ENCODE measurements at regions of chr10 and their contacts with region 1.

Region 1: DNA sequence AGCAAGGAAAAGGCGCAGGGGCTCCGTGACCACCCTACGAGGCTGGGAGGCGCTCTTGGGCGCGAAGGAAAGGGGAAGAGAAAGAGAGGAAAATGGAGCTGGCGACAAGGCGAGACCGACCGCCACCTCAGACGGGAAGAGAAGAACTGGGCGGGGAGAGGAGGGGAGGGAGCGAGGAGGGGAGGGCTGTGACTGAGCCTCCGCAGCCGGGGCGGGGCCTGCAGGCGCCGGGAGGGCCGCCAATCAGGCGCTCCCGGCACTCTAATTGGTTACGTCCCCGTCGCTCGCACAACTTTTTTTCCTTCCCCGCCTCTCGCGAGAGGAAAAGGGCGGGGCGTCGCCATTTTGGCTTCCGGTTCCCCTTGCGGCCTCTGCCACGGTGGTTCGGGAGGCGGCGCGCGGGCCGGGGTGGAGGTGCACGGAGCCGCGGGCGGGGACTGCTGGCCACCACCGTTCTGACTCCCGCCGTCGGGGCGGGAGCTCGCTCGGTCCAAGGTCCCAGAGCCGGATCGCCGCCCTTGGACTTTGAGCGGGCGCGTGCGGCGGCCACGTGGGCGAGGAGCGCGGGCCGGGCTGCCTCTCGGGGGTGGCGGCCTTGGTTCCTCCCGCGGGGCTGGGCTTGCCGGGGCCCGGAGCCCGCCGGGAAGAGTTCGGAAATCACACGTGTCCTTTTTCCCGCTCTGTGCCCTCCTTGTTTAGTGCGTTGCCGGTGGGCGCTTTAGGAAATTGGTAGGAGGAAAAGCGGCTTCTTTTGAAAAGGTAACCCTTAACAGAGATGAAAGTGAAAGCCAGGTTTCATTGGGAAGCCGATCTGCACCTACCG is at the start of gene GDI2:
- DNase-seq: peak; percentile 96
- H3K4me3 Mint-ChIP-seq: peak within 1 kb of the TSS; percentile 99
- H3K27ac Mint-ChIP-seq: peak within 1 kb of the TSS; percentile 89
- H3K4me1 Mint-ChIP-seq: peaks cover 51% of the 10 kb centered on the region
- H3K27me3 Mint-ChIP-seq: no peaks in the 10 kb centered on the region
- total RNA-seq, gene GDI2: 301 and 302 TPM in 2 replicates

Region 2: GRCh38 chr10:5629303-5630111 is 184.0 kb before region 1 on chr10:
- intact Hi-C with region 1: loop called (anchors 1 kb)
- DNase-seq: peak; percentile 79
- H3K4me3 Mint-ChIP-seq: no peak overlapping the region
- H3K27ac Mint-ChIP-seq: peak overlapping the region; percentile 83
- H3K4me1 Mint-ChIP-seq: peaks cover 19% of the 10 kb centered on the region
- H3K27me3 Mint-ChIP-seq: peaks cover 2% of the 10 kb centered on the region

Region 3: DNA sequence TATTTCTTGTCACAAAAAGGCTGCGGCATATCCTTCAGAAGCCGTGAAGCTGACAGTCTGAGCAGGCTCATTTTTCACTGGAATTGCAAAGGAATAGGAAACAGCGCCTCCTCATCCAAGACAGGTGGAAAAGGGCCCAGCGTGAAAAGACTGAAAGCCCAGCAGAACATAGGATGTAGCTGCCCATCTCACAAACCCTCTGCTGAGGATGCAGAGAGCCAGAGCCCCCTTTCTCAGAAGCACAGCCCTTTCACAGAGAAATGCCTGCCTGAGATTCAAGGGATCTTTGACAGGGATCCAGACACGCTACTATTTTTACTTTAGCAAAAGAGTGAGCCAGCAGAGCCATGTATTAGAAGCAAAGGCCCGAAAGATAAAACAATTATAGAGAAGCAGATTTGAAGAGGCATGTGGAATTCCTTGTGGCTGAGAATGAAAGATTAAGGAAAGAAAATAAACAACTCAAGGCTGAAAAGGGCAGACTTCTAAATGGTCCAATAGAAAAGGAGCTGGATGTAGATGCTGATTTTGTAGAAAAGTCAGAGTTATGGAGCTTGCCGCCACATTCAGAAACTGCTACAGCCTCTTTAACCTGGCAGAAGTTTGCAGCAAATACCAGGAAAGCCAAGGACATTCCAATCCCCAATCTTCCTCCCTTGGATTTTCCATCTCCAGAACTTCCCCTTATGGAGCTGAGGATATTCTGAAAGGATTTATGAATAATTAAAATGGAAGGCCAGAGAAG is 37.2 kb before region 1 on chr10:
- intact Hi-C with region 1: loop called (anchors 5 kb)
- DNase-seq: no peak
- H3K4me3 Mint-ChIP-seq: peak overlapping the region; percentile 11
- H3K27ac Mint-ChIP-seq: peak overlapping the region; percentile 85
- H3K4me1 Mint-ChIP-seq: peaks cover 31% of the 10 kb centered on the region
- H3K27me3 Mint-ChIP-seq: no peaks in the 10 kb centered on the region

Region 4: DNA sequence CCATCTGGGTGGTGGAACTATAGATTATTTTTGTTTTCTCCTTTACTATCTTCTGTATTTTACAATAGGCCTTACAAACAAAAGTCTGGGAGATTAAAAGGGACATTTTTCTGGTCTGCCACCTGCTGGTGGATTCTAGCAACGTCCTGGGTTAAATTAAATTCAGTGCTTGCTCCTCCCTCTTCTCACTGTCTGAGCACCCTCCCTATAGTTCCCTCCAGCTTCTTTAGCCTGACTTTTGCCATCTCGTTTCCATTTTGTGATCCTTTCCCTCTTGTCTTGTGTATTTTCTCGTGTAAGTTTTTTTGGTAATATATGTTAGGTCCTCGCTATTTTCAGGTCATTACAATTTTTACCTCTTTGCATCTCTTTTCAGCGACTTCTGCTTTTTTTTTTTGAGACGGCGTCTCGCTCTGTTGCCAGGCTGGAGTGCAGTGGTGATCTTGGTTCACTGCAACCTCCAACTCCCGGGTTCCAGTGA is 60.1 kb after region 1 on chr10:
- intact Hi-C with region 1: loop called (anchors 1 kb)
- DNase-seq: peak; percentile 55
- H3K4me3 Mint-ChIP-seq: no peak overlapping the region
- H3K27ac Mint-ChIP-seq: peak overlapping the region; percentile 4
- H3K4me1 Mint-ChIP-seq: peaks cover 11% of the 10 kb centered on the region
- H3K27me3 Mint-ChIP-seq: no peaks in the 10 kb centered on the region

Region 5: GRCh38 chr10:5977471-5978229 is 164.2 kb after region 1 on chr10 and contains the start of gene IL15RA:
- intact Hi-C with region 1: loop called (anchors 2 kb)
- DNase-seq: peak; percentile 88
- H3K4me3 Mint-ChIP-seq: peak within 1 kb of the TSS; percentile 95
- H3K27ac Mint-ChIP-seq: peak within 1 kb of the TSS; percentile 95
- H3K4me1 Mint-ChIP-seq: peaks cover 20% of the 10 kb centered on the region
- H3K27me3 Mint-ChIP-seq: peaks cover 5% of the 10 kb centered on the region
- total RNA-seq, gene IL15RA: 19.2 and 19.8 TPM in 2 replicates